ENCODE measurements at regions of chr11 and their contacts with region 1.

Region 1: DNA sequence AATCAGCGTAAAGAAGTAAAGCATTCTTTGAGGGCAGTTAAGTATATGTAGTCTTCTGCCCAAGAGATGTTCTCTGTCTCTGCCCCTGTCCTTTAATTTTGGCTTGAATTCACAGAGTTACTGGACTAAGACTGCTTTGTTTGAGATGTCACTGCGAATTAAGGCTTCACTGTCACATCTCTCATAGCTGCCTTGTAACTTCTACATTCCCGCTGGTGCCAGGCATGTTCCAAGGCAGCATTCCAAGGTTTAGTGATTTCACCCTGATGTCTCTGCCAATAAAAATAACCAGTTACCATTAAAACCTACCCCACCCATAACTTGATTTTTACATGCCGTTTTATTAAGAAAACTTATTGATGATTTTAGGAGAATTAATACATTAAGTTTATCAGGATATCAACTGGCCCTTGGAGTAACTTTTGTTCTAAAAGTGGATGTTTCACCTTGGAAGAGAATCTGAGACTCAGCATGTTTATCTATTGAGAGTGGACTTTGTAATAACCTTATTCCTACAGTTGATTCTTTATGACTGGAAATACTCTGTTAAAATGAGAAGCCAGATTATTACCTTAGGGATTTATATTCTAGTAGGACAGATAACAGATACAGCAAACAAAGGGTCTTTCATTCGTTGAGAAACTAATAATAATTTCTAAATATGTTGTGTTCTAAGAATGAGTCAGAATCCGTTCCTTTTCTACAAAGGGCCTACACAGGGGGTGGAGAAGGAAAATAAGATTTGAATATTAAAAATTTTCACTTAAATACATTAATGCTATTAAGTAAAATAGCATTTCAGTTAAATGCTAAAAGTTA is 110.2 kb downstream of the UVRAG start:
- DNase-seq: no peak
- H3K4me3 ChIP-seq: no peak overlapping the region
- H3K27ac ChIP-seq: peak overlapping the region; percentile 28
- H3K4me1 ChIP-seq: peaks cover 16% of the 10 kb centered on the region
- H3K27me3 ChIP-seq: no peaks in the 10 kb centered on the region
- CTCF ChIP-seq: no peak

Region 2: GRCh38 chr11:76025068-76025467 is 99.9 kb after region 1 on chr11:
- dilution Hi-C with region 1: loop called (anchors 25 kb)
- DNase-seq: no peak
- H3K4me3 ChIP-seq: no peak overlapping the region
- H3K27ac ChIP-seq: no peak overlapping the region
- H3K4me1 ChIP-seq: peaks cover 15% of the 10 kb centered on the region
- H3K27me3 ChIP-seq: no peaks in the 10 kb centered on the region
- CTCF ChIP-seq: no peak

Region 3: DNA sequence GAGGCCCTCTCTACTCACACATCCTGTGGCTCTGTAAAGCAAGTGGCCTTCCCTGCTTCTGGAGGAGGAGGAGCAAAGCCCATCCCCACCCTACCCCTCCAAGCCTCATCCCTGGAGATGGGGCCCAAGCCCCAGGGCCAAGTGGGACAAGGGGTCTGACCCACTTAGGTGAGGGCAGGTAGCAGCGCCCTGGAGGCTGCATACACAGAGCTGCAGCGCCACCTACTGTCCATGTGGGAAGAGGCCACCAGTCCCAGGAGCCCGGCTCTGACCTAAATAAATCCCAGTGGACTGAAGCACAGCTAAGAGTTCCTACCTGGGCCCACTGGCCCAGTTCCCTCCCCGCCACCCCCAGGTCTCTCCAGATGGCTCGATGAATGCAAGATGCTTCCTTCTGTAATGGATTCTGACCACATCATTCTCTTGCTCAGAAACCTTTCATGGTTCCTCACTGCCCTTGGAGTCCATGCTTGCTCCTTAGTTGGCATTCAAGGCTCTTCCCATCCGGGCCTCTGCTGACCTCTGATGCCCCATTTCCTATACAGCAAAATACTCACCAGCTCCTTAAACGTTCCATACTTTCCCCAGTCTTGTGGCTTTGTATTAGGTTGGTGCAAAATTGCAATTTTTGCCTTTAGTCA is 393.7 kb after region 1 on chr11:
- dilution Hi-C with region 1: no loop called
- DNase-seq: peak; percentile 38
- H3K4me3 ChIP-seq: no peak overlapping the region
- H3K27ac ChIP-seq: no peak overlapping the region
- H3K4me1 ChIP-seq: peaks cover 18% of the 10 kb centered on the region
- H3K27me3 ChIP-seq: peaks cover 12% of the 10 kb centered on the region
- CTCF ChIP-seq: peak; percentile 89 to 95 (median 94)